Naive thymus-derived CD4-positive, alpha-beta T cell (primary cell): ENCODE measurements at regions of chr2 and their contacts with region 1.

Region 1: GRCh38 chr2:100630473-100630977 is 67.7 kb downstream of the PDCL3 start:
- DNase-seq: peak in 4 of 9 donors; percentile 30 to 44 (median 36)
- ATAC-seq: peak; percentile 45
- H3K4me3 ChIP-seq: no peak overlapping the region
- H3K4me3 Mint-ChIP-seq: peak overlapping the region in 9 of 10 donors; percentile 8 to 74 (median 52)
- H3K27ac ChIP-seq: no peak overlapping the region
- H3K27ac Mint-ChIP-seq: peak overlapping the region in 7 of 9 donors; percentile 8 to 86 (median 53)
- H3K4me1 ChIP-seq: peaks cover 0 to 14% of the 10 kb centered on the region in 2 donors
- H3K4me1 Mint-ChIP-seq: peaks cover 25 to 46% (median 31%) of the 10 kb centered on the region in 7 donors
- H3K27me3 ChIP-seq: no peaks in the 10 kb centered on the region
- H3K27me3 Mint-ChIP-seq: peaks cover 0 to 11% (median 0%) of the 10 kb centered on the region in 5 donors

Region 2: GRCh38 chr2:100653449-100654035 is 23.0 kb after region 1 on chr2:
- CTCF ChIA-PET with region 1: interaction called, 10 read pairs
- POLR2A ChIA-PET with region 1: interaction called, 3 read pairs
- intact Hi-C with region 1: no loop called
- DNase-seq: peak in 8 of 9 donors; percentile 37 to 90 (median 85)
- ATAC-seq: peak; percentile 95
- H3K4me3 ChIP-seq: no peak overlapping the region
- H3K4me3 Mint-ChIP-seq: peak overlapping the region in 9 of 10 donors; percentile 37 to 79 (median 67)
- H3K27ac ChIP-seq: peak overlapping the region; percentile 57
- H3K27ac Mint-ChIP-seq: peak overlapping the region; percentile 14 to 97 (median 92)
- H3K4me1 ChIP-seq: peaks cover 0 to 58% of the 10 kb centered on the region in 2 donors
- H3K4me1 Mint-ChIP-seq: peaks cover 13 to 76% (median 59%) of the 10 kb centered on the region in 7 donors
- H3K27me3 ChIP-seq: no peaks in the 10 kb centered on the region
- H3K27me3 Mint-ChIP-seq: no peaks in the 10 kb centered on the region

Region 3: GRCh38 chr2:100673691-100674485 is 43.4 kb after region 1 on chr2:
- CTCF ChIA-PET with region 1: no interaction called
- POLR2A ChIA-PET with region 1: no interaction called
- intact Hi-C with region 1: no loop called
- DNase-seq: no peak
- ATAC-seq: no peak
- H3K4me3 ChIP-seq: no peak overlapping the region
- H3K4me3 Mint-ChIP-seq: no peak overlapping the region
- H3K27ac ChIP-seq: no peak overlapping the region
- H3K27ac Mint-ChIP-seq: no peak overlapping the region
- H3K4me1 ChIP-seq: no peaks in the 10 kb centered on the region
- H3K4me1 Mint-ChIP-seq: peaks cover 0 to 9% (median 4%) of the 10 kb centered on the region in 7 donors
- H3K27me3 ChIP-seq: no peaks in the 10 kb centered on the region
- H3K27me3 Mint-ChIP-seq: peaks cover 0 to 3% (median 0%) of the 10 kb centered on the region in 5 donors

Region 4: GRCh38 chr2:100692381-100692780 is 61.9 kb after region 1 on chr2:
- CTCF ChIA-PET with region 1: no interaction called
- POLR2A ChIA-PET with region 1: no interaction called
- intact Hi-C with region 1: no loop called
- DNase-seq: no peak
- ATAC-seq: no peak
- H3K4me3 ChIP-seq: no peak overlapping the region
- H3K4me3 Mint-ChIP-seq: no peak overlapping the region
- H3K27ac ChIP-seq: no peak overlapping the region
- H3K27ac Mint-ChIP-seq: no peak overlapping the region
- H3K4me1 ChIP-seq: no peaks in the 10 kb centered on the region
- H3K4me1 Mint-ChIP-seq: peaks cover 0 to 11% (median 3%) of the 10 kb centered on the region in 7 donors
- H3K27me3 ChIP-seq: no peaks in the 10 kb centered on the region
- H3K27me3 Mint-ChIP-seq: peaks cover 0 to 13% (median 0%) of the 10 kb centered on the region in 5 donors

Region 5: DNA sequence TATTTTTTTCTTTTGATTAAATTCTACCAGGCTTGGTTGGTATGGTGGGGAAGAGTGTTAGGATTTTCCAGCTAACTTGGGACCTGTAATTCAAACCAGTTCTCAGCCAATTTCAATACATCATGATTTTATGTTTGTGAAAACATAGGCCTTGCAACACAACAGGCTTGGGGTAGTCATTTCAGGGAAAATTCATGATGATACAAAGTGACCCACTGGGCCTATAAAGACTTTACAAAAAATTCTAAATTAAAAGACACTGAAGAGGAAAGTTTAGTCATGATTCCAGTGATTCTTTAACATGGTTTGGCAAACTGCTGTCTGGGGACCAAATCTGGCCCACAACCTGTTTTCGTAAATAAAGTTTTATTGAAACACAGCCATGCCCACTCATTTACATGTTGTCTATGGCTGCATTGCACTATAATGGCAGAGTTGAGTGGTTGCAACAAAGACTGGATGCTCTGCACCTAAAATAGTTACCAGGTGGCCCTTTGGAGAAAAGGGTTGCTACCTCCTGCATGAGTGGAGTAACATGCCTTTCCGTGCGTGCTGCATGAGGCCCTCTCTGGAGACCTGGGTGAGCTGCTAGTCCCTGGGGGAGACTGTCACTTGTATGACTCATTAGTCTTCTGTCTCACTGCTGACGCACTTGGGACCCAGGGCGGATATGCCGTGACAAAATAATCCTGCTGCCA is 263.0 kb after region 1 on chr2:
- CTCF ChIA-PET with region 1: no interaction called
- POLR2A ChIA-PET with region 1: no interaction called
- intact Hi-C with region 1: no loop called
- DNase-seq: no peak
- ATAC-seq: no peak
- H3K4me3 ChIP-seq: no peak overlapping the region
- H3K4me3 Mint-ChIP-seq: no peak overlapping the region
- H3K27ac ChIP-seq: no peak overlapping the region
- H3K27ac Mint-ChIP-seq: no peak overlapping the region
- H3K4me1 ChIP-seq: no peaks in the 10 kb centered on the region
- H3K4me1 Mint-ChIP-seq: peaks cover 0 to 8% (median 0%) of the 10 kb centered on the region in 7 donors
- H3K27me3 ChIP-seq: no peaks in the 10 kb centered on the region
- H3K27me3 Mint-ChIP-seq: no peaks in the 10 kb centered on the region